ENCODE measurements at regions of chr5 and their contacts with region 1.

Region 1: DNA sequence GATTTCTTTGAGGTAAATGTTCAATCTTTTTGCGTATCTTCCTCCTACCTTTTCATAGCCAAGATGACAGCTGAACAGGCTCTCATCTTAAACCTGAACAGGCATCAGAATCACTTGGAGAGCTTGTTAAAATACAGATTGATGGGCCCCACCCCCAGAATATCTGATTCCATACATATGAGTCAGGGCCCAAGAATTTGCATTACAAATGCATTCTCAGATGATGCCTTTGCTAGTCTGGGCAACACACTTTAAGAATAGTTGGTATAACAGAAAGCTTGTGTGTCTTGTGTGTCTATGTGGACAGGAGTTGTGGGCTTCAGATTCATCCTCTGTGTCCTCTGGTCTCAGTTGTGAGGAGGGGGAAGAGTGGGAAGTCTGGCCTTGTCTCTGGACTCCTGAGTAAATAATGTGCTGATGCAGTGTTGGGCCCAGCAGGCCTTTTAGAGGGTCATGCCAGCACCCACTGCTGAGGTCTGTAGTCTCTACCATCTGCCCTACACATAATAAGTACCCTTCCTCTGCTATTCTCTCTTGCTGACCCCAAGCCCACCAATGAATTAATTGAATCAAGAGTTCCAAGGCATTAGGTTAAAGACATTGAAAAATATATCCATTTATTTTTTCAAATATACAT is 43.1 kb downstream of the PTCD2 start:
- DNase-seq: no peak
- H3K4me3 ChIP-seq: no peak overlapping the region
- H3K27ac ChIP-seq: no peak overlapping the region
- H3K4me1 ChIP-seq: peaks cover 0 to 5% (median 0%) of the 10 kb centered on the region in 3 donors
- H3K27me3 ChIP-seq: no peaks in the 10 kb centered on the region
- CTCF ChIP-seq: no peak

Region 2: GRCh38 chr5:72525833-72526232 is 162.5 kb after region 1 on chr5:
- intact Hi-C with region 1: loop called (anchors 5 kb)
- DNase-seq: no peak
- H3K4me3 ChIP-seq: no peak overlapping the region
- H3K27ac ChIP-seq: no peak overlapping the region
- H3K4me1 ChIP-seq: peaks cover 0 to 2% (median 0%) of the 10 kb centered on the region in 3 donors
- H3K27me3 ChIP-seq: no peaks in the 10 kb centered on the region
- CTCF ChIP-seq: no peak